ENCODE measurements at regions of chr1 and their contacts with region 1.

Region 1: GRCh38 chr1:222455188-222455879 is 92.6 kb downstream of the HHIPL2 start:
- DNase-seq: peak; percentile 86 to 93
- ATAC-seq: peak; percentile 94
- H3K4me3 ChIP-seq: no peak overlapping the region
- H3K27ac ChIP-seq: no peak overlapping the region
- H3K4me1 ChIP-seq: no peaks in the 10 kb centered on the region
- H3K27me3 ChIP-seq: no peaks in the 10 kb centered on the region

Region 2: DNA sequence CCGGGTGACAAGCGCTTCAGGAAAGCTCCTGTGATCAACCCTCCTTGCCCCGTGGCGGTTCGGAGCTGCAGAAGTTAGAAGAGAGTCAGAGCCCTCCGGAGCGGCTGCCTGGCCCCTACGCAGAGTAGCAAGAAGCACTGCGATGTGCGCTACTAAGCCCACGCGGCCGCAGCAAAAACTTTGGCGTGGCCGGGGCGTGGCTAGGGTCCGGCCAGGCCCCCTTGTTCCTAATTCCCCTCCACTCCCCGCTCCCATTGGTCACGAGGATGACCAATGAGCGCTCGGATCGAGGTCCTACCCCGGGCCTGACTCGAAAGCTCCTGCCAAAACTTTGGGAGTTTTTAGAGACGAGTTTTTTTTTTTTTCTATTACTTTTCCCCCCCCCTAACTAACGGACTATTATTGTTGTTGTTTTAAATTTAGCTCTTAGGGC is 1576.2 kb before region 1 on chr1 and contains the start of gene HLX:
- intact Hi-C with region 1: loop called (anchors 10 kb)
- DNase-seq: peak; percentile 97
- ATAC-seq: peak; percentile 95
- H3K4me3 ChIP-seq: peak within 1 kb of the TSS; percentile 72 to 84
- H3K27ac ChIP-seq: peak within 1 kb of the TSS in 1 of 2 donors; percentile 60
- H3K4me1 ChIP-seq: no peaks in the 10 kb centered on the region
- H3K27me3 ChIP-seq: no peaks in the 10 kb centered on the region
- total RNA-seq, gene HLX: 13.1 to 21.6 TPM

Region 3: DNA sequence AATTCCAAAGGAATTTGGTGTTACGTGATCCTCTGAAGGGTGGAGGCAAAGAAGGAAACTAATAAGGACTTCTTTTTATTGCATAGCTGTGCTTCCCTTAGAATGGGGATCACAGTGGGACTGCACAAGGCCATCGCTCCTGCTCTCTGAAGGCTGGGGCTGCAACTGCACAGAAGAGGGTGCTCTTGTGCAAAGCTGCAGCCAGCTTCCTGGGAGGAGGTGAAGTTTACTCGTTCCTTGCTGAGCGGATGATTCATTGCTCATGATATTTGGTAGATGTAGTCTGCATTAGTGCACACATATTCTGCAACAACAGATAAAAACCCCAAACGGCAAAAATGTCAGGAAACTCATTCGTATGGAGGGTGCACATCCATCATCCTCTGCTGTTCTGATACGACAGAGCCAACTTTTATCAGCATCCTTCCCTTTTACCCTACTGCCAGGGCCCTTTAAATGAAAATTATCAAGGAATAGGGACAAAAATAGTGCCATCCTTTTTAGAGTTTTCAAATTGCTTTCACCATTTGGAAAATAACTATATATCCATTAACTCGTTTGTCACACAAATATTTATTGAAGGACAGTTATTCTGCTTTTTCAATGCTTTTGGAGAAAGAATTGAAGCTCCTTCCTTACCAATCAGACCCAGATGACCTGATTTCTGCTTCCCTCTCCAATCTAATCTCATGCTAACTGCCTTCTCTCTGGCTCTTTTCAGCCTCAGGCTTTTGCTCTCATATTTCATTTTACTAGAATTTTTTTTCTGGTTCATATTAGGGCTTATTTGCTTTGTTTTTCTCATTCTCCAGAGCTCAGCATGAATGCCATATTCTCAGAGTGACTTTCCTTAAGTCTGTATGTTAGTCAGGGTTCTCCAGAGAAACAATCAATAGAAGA is 977.0 kb before region 1 on chr1:
- intact Hi-C with region 1: loop called in 1 of 2 experiments (anchors 5 kb)
- DNase-seq: peak in 1 of 2 donors; percentile 61
- ATAC-seq: peak; percentile 77
- H3K4me3 ChIP-seq: no peak overlapping the region
- H3K27ac ChIP-seq: no peak overlapping the region
- H3K4me1 ChIP-seq: no peaks in the 10 kb centered on the region
- H3K27me3 ChIP-seq: peaks cover 0 to 4% of the 10 kb centered on the region in 2 donors

Region 4: GRCh38 chr1:222095606-222096475 is 359.5 kb before region 1 on chr1:
- intact Hi-C with region 1: loop called in 1 of 2 experiments (anchors 10 kb)
- DNase-seq: peak; percentile 48 to 74
- ATAC-seq: no peak
- H3K4me3 ChIP-seq: no peak overlapping the region
- H3K27ac ChIP-seq: no peak overlapping the region
- H3K4me1 ChIP-seq: no peaks in the 10 kb centered on the region
- H3K27me3 ChIP-seq: no peaks in the 10 kb centered on the region

Measured in aorta (tissue), 5 donors.